Caco-2 (cell line): ENCODE measurements at regions of chr15 and their contacts with region 1.

Region 1: DNA sequence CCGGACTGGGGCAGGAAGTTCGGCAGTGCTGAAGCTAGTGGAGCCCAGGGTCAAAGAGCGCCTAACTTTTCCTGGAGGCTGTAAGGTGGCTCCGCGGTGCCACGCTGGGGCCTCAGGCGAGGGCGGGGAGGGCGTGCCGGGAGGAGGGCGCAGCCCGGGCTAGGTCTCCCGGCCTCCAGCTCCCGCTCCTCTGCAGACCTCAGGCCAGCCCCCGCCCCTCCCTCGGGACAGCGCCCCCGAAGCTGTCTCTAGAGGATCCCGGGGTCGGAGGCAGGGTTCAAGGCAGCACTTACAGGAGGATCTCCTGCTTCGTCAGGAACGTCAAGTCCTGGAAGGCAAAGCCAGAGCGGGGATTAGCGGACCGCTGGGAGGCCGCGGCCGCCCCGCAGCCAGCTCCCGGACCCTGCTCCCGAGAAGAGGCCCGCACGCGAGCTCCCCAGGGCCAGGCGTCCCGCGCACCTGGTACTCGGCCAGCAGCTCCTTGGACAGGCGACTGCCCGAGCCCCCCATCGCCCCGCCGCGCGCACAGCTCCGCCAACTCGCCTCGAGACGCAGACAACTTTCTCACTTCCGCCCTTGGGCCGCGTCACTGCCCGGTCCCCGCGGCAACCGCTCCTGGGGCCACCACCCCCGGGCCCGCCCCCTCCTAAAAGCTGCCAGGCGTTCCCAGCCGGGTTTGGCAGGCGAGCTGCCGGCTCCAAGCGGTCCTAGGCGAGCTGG is at the start of gene CIB1:
- DNase-seq: peak; percentile 96 to 97
- H3K4me3 ChIP-seq: peak within 1 kb of the TSS; percentile 63
- H3K4me3 Mint-ChIP-seq: peak within 1 kb of the TSS; percentile 80
- H3K27ac Mint-ChIP-seq: peak within 1 kb of the TSS; percentile 88
- H3K4me1 ChIP-seq: no peaks in the 10 kb centered on the region; the same call in 1 of the 2 replicates
- H3K4me1 Mint-ChIP-seq: peaks cover 16% of the 10 kb centered on the region
- H3K27me3 ChIP-seq: no peaks in the 10 kb centered on the region
- H3K27me3 Mint-ChIP-seq: no peaks in the 10 kb centered on the region
- CTCF ChIP-seq: peak in 1 of 2 experiments; percentile 79
- total RNA-seq, gene CIB1: 37.7 and 44.5 TPM in 2 replicates

Region 2: GRCh38 chr15:90143166-90143655 is 90.3 kb before region 1 on chr15:
- CTCF ChIA-PET with region 1: interaction called, 37 read pairs
- POLR2A ChIA-PET with region 1: interaction called, 5 read pairs
- intact Hi-C with region 1: no loop called
- DNase-seq: peak; percentile 83 to 88
- H3K4me3 ChIP-seq: no peak overlapping the region
- H3K4me3 Mint-ChIP-seq: no peak overlapping the region
- H3K27ac Mint-ChIP-seq: no peak overlapping the region
- H3K4me1 ChIP-seq: no peaks in the 10 kb centered on the region
- H3K4me1 Mint-ChIP-seq: peaks cover 7% of the 10 kb centered on the region
- H3K27me3 ChIP-seq: no peaks in the 10 kb centered on the region
- H3K27me3 Mint-ChIP-seq: no peaks in the 10 kb centered on the region
- CTCF ChIP-seq: peak; percentile 79 to 91

Region 3: GRCh38 chr15:90221246-90221900 is 12.2 kb before region 1 on chr15:
- CTCF ChIA-PET with region 1: interaction called, 24 read pairs
- POLR2A ChIA-PET with region 1: interaction called, 6 read pairs
- intact Hi-C with region 1: no loop called
- DNase-seq: peak; percentile 74 to 75
- H3K4me3 ChIP-seq: no peak overlapping the region
- H3K4me3 Mint-ChIP-seq: no peak overlapping the region
- H3K27ac Mint-ChIP-seq: no peak overlapping the region
- H3K4me1 ChIP-seq: no peaks in the 10 kb centered on the region
- H3K4me1 Mint-ChIP-seq: no peaks in the 10 kb centered on the region
- H3K27me3 ChIP-seq: no peaks in the 10 kb centered on the region
- H3K27me3 Mint-ChIP-seq: no peaks in the 10 kb centered on the region
- CTCF ChIP-seq: peak; percentile 56 to 66

Region 4: DNA sequence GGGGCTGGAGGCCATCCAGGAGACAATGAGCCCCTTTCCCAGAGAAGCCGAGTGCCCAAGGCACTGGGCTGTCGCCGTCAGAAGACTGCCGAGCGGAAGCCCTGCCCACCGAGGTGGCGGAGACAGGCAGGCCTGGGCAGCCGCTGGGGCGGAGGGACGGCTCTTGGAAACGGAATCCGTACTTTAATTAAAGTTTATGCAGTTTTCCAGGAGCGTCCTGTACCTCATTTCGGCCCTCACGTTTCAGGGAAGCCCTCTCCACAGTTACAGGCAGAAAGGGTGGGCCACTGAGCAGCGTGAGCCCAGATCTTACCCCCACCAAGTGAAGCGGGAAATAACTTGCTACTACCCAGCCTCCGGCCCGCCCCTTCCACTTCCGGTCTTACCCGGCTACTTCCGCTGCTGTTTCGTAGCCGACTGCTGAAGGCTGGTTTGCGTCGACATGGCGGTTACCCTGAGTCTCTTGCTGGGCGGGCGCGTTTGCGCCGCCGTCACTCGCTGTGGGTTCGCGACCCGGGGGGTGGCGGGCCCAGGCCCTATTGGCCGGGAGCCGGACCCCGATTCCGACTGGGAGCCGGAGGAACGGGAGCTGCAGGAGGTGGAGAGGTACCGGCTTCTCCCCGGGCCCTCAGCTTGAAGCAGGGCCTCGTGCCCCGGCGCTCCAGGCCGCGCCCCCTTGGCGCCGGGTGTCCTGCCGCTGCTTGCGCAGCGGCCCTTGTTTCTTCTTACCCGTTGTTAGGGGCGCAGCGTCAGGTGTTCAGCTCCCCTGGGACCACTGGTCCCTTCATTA is 31.9 kb after region 1 on chr15 and contains the start of gene NGRN:
- CTCF ChIA-PET with region 1: no interaction called
- POLR2A ChIA-PET with region 1: interaction called, 8 read pairs
- intact Hi-C with region 1: loop called (anchors 1 kb)
- DNase-seq: peak; percentile 87 to 89
- H3K4me3 ChIP-seq: peak within 1 kb of the TSS; percentile 64
- H3K4me3 Mint-ChIP-seq: peak within 1 kb of the TSS; percentile 95
- H3K27ac Mint-ChIP-seq: peak within 1 kb of the TSS; percentile 97
- H3K4me1 ChIP-seq: peaks cover 11% of the 10 kb centered on the region; the same call in 1 of the 2 replicates
- H3K4me1 Mint-ChIP-seq: peaks cover 22% of the 10 kb centered on the region
- H3K27me3 ChIP-seq: no peaks in the 10 kb centered on the region
- H3K27me3 Mint-ChIP-seq: no peaks in the 10 kb centered on the region
- CTCF ChIP-seq: no peak
- total RNA-seq, gene NGRN: 93.6 and 101 TPM in 2 replicates

Region 5: GRCh38 chr15:90836296-90836871 is 602.8 kb after region 1 on chr15:
- CTCF ChIA-PET with region 1: no interaction called
- POLR2A ChIA-PET with region 1: interaction called, 16 read pairs
- intact Hi-C with region 1: no loop called
- DNase-seq: no peak
- H3K4me3 ChIP-seq: no peak overlapping the region
- H3K4me3 Mint-ChIP-seq: no peak overlapping the region
- H3K27ac Mint-ChIP-seq: no peak overlapping the region
- H3K4me1 ChIP-seq: peaks cover 21% of the 10 kb centered on the region
- H3K4me1 Mint-ChIP-seq: peaks cover 22% of the 10 kb centered on the region
- H3K27me3 ChIP-seq: no peaks in the 10 kb centered on the region
- H3K27me3 Mint-ChIP-seq: no peaks in the 10 kb centered on the region
- CTCF ChIP-seq: no peak